ENCODE measurements at regions of chr17 and their contacts with region 1.

Region 1: DNA sequence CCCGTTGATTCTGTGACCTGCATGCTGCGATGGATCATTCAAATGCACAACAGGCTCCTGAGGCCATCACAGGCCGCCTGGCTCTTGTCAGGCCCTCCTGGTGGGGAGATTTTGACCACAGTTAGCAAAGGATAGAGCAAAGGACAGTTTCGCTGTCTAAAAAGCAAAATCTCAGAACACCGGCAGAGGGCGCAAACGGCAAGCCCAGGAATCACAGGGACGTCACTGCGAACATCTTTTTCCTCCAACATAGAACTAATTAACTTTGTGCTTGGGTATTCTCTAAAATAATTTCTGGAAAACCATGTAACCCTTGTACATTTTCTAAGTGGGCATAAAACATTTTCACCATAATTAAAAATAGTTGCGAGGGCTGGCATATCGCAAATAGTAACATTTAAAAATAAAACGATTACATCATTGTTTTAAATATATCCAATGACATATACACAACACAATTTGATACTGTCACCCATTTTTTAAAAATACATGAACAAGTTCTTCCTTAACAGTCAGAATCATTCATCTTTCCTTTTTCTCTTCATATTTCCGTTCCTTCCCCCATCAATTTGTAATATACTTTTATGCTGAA is 19.7 kb upstream of the SLC47A1 start:
- DNase-seq: peak; percentile 79
- H3K4me3 ChIP-seq: no peak overlapping the region
- H3K27ac ChIP-seq: no peak overlapping the region
- H3K4me1 ChIP-seq: no peaks in the 10 kb centered on the region
- H3K27me3 ChIP-seq: no peaks in the 10 kb centered on the region
- CTCF ChIP-seq: peak; percentile 94

Region 2: GRCh38 chr17:19648475-19649406 is 134.7 kb after region 1 on chr17 and contains the start of gene ALDH3A2:
- CTCF ChIA-PET with region 1: no interaction called
- POLR2A ChIA-PET with region 1: no interaction called
- intact Hi-C with region 1: loop called (anchors 5 kb)
- DNase-seq: peak; percentile 98
- H3K4me3 ChIP-seq: peak within 1 kb of the TSS; percentile 81
- H3K27ac ChIP-seq: peak within 1 kb of the TSS; percentile 79
- H3K4me1 ChIP-seq: peaks cover 31% of the 10 kb centered on the region
- H3K27me3 ChIP-seq: no peaks in the 10 kb centered on the region
- CTCF ChIP-seq: 0 out of 2 replicates have a peak, but pooled peaks have one; percentile 14
- total RNA-seq, gene ALDH3A2: 97.0 and 97.3 TPM in 2 replicates